IMR-90 (cell line): ENCODE measurements at regions of chr1 and their contacts with region 1.

Region 1: GRCh38 chr1:155084722-155085503 is 6.3 kb downstream of the EFNA3 start:
- DNase-seq: peak; percentile 91
- ATAC-seq: peak; percentile 87
- H3K4me3 ChIP-seq: peak overlapping the region; percentile 76
- H3K27ac ChIP-seq: peak overlapping the region; percentile 60
- H3K4me1 ChIP-seq: peaks cover 5% of the 10 kb centered on the region; the same call in 1 of the 2 replicates
- H3K27me3 ChIP-seq: peaks cover 43% of the 10 kb centered on the region
- CTCF ChIP-seq: peak; percentile 99
- POLR2A ChIP-seq: no peak
- RAD21 ChIP-seq: peak; percentile 97

Region 2: DNA sequence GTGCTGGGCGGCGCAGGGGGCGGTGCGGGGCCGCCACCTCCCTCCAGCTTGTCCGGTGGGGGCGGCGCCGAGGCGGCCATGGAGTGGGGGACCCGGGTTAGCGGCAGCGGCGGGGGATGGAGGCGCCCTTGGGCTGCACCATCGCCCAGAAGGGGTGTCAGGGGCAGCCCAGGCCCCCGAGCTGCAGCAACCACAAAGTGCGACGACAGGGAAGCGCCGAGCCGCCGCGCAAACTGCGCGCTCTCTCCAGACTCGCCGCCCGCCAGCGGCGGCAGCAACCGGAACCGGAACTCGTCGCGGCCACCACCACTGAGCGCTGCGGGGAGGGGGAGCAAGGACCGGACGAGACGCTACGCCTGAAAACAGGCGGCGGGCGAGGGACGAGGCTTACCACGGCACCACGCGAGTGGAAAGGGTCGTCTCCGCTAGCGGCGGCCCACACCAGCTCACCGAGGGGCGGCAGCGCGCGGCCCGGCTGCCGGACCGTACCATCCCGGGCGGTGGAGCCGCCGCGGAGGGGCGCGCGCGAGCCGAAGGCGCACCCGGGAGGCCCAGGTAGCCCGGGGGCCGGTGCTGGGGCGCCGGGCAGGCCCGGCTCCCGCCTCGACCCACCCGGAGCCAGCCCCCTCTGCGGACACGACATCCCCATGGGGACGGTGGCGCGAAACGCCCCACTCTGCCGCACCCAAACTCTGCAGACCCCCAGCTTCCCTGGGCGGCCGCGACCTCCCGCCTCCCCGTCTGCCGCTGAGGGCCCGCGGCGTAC is 123.2 kb before region 1 on chr1 and contains the start of gene PYGO2:
- CTCF ChIA-PET with region 1: interaction called, 3 read pairs
- POLR2A ChIA-PET with region 1: no interaction called
- dilution Hi-C with region 1: no loop called
- in situ Hi-C with region 1: no loop called
- intact Hi-C with region 1: loop called (anchors 2 kb)
- DNase-seq: peak; percentile 66
- ATAC-seq: peak; percentile 86
- H3K4me3 ChIP-seq: peak within 1 kb of the TSS; percentile 86
- H3K27ac ChIP-seq: peak within 1 kb of the TSS; percentile 96
- H3K4me1 ChIP-seq: peaks cover 9% of the 10 kb centered on the region
- H3K27me3 ChIP-seq: no peaks in the 10 kb centered on the region
- CTCF ChIP-seq: peak; percentile 69
- POLR2A ChIP-seq: peak; percentile 40
- RAD21 ChIP-seq: peak; percentile 62
- total RNA-seq, gene PYGO2: 5.3 and 5.4 TPM in 2 replicates

Region 3: DNA sequence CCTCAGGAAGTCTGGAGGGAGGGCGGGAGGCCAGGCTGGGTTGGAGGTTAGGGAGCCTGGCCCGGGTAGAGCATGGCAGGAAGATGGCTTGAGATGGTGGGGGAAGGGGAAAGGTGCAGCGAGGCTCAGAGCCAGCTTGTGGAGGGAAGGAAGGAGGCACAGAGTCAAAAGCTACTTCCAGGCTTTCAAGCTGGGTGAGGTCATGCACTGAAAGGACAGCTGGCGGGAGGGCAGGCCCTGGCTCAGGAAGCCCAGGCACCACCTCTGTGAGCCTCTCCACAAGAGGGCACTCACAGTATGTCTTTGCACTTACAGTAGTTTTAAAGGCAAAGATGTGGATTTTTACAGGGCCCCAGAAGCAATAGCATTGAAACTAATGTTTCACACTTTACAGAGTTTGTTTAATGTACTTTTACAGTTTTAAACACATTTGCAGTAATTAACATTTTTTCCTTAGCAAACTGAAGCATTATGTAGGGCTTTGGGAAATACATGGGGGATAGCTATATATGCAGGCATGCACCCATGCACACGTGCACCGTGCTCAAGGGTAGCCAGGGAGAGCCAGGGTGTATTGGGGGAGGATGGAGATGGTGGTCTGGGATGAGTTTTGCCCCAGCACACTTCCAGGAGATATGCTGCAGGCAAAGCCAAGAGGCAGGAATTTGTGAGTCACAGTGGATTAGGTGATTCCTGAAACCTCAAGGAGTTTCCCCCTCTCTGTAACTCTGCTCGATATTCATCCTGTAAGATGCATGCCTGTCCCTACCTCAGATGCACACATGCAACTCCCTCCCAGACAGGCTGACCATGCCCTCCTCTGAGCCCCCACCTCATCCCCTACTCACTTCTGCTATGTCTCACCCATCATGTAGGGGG is 39.9 kb before region 1 on chr1:
- CTCF ChIA-PET with region 1: interaction called, 9 read pairs
- POLR2A ChIA-PET with region 1: no interaction called
- dilution Hi-C with region 1: no loop called
- in situ Hi-C with region 1: no loop called
- intact Hi-C with region 1: loop called (anchors 1 kb)
- DNase-seq: peak; percentile 75
- ATAC-seq: peak; percentile 98
- H3K4me3 ChIP-seq: no peak overlapping the region
- H3K27ac ChIP-seq: no peak overlapping the region
- H3K4me1 ChIP-seq: peaks cover 9% of the 10 kb centered on the region
- H3K27me3 ChIP-seq: peaks cover 12% of the 10 kb centered on the region; the same call in 1 of the 2 replicates
- CTCF ChIP-seq: peak; percentile 82
- POLR2A ChIP-seq: no peak
- RAD21 ChIP-seq: peak; percentile 74

Region 4: DNA sequence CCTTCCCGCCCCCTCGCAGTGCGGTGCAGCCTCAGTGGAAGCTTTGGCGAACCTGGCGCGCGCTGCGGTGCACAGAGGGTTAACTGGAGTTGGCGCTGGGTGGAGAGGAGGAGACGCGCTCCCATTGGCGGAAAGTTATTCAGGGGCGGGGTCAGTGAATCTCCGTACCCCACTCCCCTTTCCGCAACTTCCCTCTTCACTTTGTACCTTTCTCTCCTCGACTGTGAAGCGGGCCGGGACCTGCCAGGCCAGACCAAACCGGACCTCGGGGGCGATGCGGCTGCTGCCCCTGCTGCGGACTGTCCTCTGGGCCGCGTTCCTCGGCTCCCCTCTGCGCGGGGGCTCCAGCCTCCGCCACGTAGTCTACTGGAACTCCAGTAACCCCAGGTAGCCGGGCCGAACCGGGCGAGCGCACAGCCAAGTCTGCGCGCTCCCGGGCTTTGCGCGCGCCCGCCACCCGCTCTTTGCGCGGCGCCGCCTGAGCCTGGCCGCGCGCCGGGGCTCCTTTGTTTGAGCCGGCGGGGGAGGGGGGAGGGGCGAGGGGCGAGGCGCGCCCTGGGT is 21.3 kb before region 1 on chr1 and contains the start of gene EFNA4:
- CTCF ChIA-PET with region 1: interaction called, 9 read pairs
- POLR2A ChIA-PET with region 1: no interaction called
- dilution Hi-C with region 1: no loop called
- in situ Hi-C with region 1: no loop called
- intact Hi-C with region 1: loop called (anchors 1 kb)
- DNase-seq: peak; percentile 80
- ATAC-seq: peak; percentile 91
- H3K4me3 ChIP-seq: peak within 1 kb of the TSS; percentile 90
- H3K27ac ChIP-seq: peak within 1 kb of the TSS; percentile 44
- H3K4me1 ChIP-seq: peaks cover 4% of the 10 kb centered on the region; the same call in 1 of the 2 replicates
- H3K27me3 ChIP-seq: no peaks in the 10 kb centered on the region
- CTCF ChIP-seq: no peak
- POLR2A ChIP-seq: peak; percentile 53; the same call in 1 of the 2 replicates
- RAD21 ChIP-seq: no peak
- total RNA-seq, gene EFNA4: 3.3 and 3.8 TPM in 2 replicates

Region 5: DNA sequence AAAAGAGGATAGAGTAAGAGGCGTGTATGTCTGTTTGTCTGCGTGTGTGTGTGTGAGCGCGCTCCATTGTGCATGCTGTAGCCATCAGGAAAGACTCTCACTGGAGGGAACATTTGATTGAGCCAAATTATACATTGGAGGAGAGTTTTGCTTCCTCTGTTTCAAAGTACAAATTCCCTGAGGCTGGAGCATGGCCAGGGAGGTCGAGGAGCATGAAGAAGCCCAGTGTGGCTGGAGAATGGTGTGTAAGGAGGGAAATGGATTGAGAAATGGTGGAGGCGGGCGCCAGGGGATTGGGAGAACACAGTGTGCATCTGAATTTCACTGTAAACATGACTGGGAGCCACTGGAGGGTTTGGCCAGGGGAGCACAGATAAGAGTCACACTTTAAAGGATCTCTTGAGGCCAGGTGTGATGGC is 20.7 kb after region 1 on chr1:
- CTCF ChIA-PET with region 1: no interaction called
- POLR2A ChIA-PET with region 1: no interaction called
- dilution Hi-C with region 1: no loop called
- in situ Hi-C with region 1: no loop called
- intact Hi-C with region 1: no loop called
- DNase-seq: no peak
- ATAC-seq: no peak
- H3K4me3 ChIP-seq: no peak overlapping the region
- H3K27ac ChIP-seq: no peak overlapping the region
- H3K4me1 ChIP-seq: no peaks in the 10 kb centered on the region
- H3K27me3 ChIP-seq: peaks cover 45% of the 10 kb centered on the region
- CTCF ChIP-seq: no peak
- POLR2A ChIP-seq: no peak
- RAD21 ChIP-seq: no peak

Region 6: DNA sequence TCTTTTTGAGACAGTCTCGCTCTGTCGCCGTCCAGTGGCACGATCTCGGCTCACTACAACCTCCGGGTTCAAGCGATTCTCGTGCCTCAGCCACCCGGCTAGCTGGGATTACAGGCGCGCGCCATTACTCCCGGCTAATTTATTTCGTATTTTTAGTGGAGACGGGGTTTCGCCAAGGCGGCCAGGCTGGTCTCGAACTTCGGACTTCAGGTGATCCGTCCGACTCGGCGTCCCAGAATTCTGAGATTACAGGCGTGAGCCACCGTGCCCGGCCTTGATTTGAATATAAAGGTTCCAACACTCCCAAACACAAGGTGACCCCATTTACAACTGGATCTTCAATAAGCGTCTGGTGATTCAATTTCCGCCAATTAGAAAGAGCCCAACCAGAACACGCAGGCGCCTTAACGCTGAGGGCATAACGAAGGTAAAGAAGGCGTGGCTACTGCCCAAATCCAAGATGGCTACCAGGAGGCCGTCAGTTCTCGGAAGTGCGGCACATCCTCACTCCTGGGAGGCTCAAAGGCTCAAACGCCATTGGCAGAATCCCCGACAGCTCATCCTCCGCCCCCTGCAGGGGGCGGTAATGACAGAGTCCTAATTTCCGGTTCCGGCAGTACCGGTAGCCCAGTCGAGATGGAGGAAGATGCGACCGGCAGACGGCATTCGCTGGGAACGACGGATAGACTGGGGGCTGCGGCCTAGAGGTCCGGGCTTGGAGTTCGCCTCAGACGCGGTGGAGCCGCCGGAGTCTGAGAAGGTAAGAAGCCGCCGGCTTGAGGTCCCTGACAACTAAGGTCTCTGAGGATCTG is 1108.8 kb after region 1 on chr1 and contains the start of gene SLC25A44:
- CTCF ChIA-PET with region 1: no interaction called
- POLR2A ChIA-PET with region 1: no interaction called
- dilution Hi-C with region 1: no loop called
- in situ Hi-C with region 1: no loop called
- intact Hi-C with region 1: no loop called
- DNase-seq: peak; percentile 99
- ATAC-seq: peak; percentile 99
- H3K4me3 ChIP-seq: peak within 1 kb of the TSS; percentile 60
- H3K27ac ChIP-seq: peak within 1 kb of the TSS; percentile 68
- H3K4me1 ChIP-seq: no peaks in the 10 kb centered on the region
- H3K27me3 ChIP-seq: no peaks in the 10 kb centered on the region
- CTCF ChIP-seq: peak; percentile 61
- POLR2A ChIP-seq: peak; percentile 92
- RAD21 ChIP-seq: no peak
- total RNA-seq, gene SLC25A44: 12.7 and 12.8 TPM in 2 replicates